ENCODE measurements at regions of chr1 and their contacts with region 1.

Region 1: GRCh38 chr1:92623187-92623778 is 136.6 kb upstream of the GFI1 start:
- DNase-seq: peak in 3 of 14 experiments; percentile 47 to 51 (median 50)
- ATAC-seq: no peak
- H3K4me3 ChIP-seq: no peak overlapping the region
- H3K4me3 Mint-ChIP-seq: no peak overlapping the region
- H3K27ac ChIP-seq: no peak overlapping the region
- H3K27ac Mint-ChIP-seq: no peak overlapping the region
- H3K4me1 ChIP-seq: no peaks in the 10 kb centered on the region
- H3K4me1 Mint-ChIP-seq: no peaks in the 10 kb centered on the region
- H3K27me3 ChIP-seq: no peaks in the 10 kb centered on the region
- H3K27me3 Mint-ChIP-seq: no peaks in the 10 kb centered on the region
- CTCF ChIP-seq: peak; percentile 76

Region 2: GRCh38 chr1:91282695-91283420 is 1340.4 kb before region 1 on chr1:
- CTCF ChIA-PET with region 1: no interaction called
- POLR2A ChIA-PET with region 1: no interaction called
- intact Hi-C with region 1: loop called in 1 of 2 experiments (anchors 5 kb)
- DNase-seq: peak in 12 of 14 experiments; percentile 2 to 67 (median 22)
- ATAC-seq: no peak
- H3K4me3 ChIP-seq: no peak overlapping the region
- H3K4me3 Mint-ChIP-seq: no peak overlapping the region
- H3K27ac ChIP-seq: no peak overlapping the region
- H3K27ac Mint-ChIP-seq: no peak overlapping the region
- H3K4me1 ChIP-seq: no peaks in the 10 kb centered on the region
- H3K4me1 Mint-ChIP-seq: no peaks in the 10 kb centered on the region
- H3K27me3 ChIP-seq: no peaks in the 10 kb centered on the region
- H3K27me3 Mint-ChIP-seq: peaks cover 11% of the 10 kb centered on the region
- CTCF ChIP-seq: peak; percentile 69

Region 3: GRCh38 chr1:91500756-91501522 is 1122.3 kb before region 1 on chr1 and contains the start of gene CDC7:
- CTCF ChIA-PET with region 1: no interaction called
- POLR2A ChIA-PET with region 1: no interaction called
- intact Hi-C with region 1: loop called in 1 of 2 experiments (anchors 10 kb)
- DNase-seq: peak; percentile 61 to 92 (median 80)
- ATAC-seq: peak; percentile 83
- H3K4me3 ChIP-seq: peak within 1 kb of the TSS; percentile 74
- H3K4me3 Mint-ChIP-seq: no peak within 1 kb of the TSS
- H3K27ac ChIP-seq: peak within 1 kb of the TSS; percentile 35 to 62
- H3K27ac Mint-ChIP-seq: no peak within 1 kb of the TSS
- H3K4me1 ChIP-seq: peaks cover 13% of the 10 kb centered on the region
- H3K4me1 Mint-ChIP-seq: peaks cover 31% of the 10 kb centered on the region
- H3K27me3 ChIP-seq: no peaks in the 10 kb centered on the region
- H3K27me3 Mint-ChIP-seq: no peaks in the 10 kb centered on the region
- CTCF ChIP-seq: peak; percentile 61
- total RNA-seq, gene CDC7: 4.2 to 4.8 TPM

Region 4: GRCh38 chr1:91997607-91998195 is 625.6 kb before region 1 on chr1:
- CTCF ChIA-PET with region 1: interaction called, 5 read pairs
- POLR2A ChIA-PET with region 1: no interaction called
- intact Hi-C with region 1: loop called (anchors 1 kb)
- DNase-seq: peak in 12 of 14 experiments; percentile 3 to 79 (median 32)
- ATAC-seq: peak; percentile 54
- H3K4me3 ChIP-seq: no peak overlapping the region
- H3K4me3 Mint-ChIP-seq: no peak overlapping the region
- H3K27ac ChIP-seq: no peak overlapping the region
- H3K27ac Mint-ChIP-seq: no peak overlapping the region
- H3K4me1 ChIP-seq: no peaks in the 10 kb centered on the region
- H3K4me1 Mint-ChIP-seq: no peaks in the 10 kb centered on the region
- H3K27me3 ChIP-seq: no peaks in the 10 kb centered on the region
- H3K27me3 Mint-ChIP-seq: no peaks in the 10 kb centered on the region
- CTCF ChIP-seq: peak; percentile 77

Region 5: DNA sequence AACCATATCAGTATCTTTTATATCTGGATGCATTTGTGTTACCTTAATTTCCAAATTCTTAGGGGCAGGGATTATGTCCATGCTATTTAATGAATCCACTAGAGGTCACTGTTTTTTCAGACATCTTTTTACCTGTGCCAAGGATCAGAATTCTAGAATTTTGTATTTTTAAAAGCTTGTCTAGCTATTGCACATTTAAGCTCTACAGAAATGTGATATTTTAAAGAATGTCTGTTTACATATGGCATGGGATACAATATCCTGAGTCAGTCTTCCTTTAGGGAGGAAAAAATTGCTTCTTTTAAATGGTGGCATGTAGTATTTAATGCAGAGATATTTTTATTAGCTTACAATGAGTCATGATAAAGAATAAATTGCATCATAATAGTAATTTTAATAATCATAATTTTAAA is 313.1 kb before region 1 on chr1:
- CTCF ChIA-PET with region 1: interaction called, 7 read pairs
- POLR2A ChIA-PET with region 1: no interaction called
- intact Hi-C with region 1: loop called (anchors 1 kb)
- DNase-seq: peak in 3 of 14 experiments; percentile 62 to 66 (median 64)
- ATAC-seq: peak; percentile 72
- H3K4me3 ChIP-seq: no peak overlapping the region
- H3K4me3 Mint-ChIP-seq: no peak overlapping the region
- H3K27ac ChIP-seq: no peak overlapping the region
- H3K27ac Mint-ChIP-seq: no peak overlapping the region
- H3K4me1 ChIP-seq: peaks cover 24% of the 10 kb centered on the region
- H3K4me1 Mint-ChIP-seq: peaks cover 39% of the 10 kb centered on the region
- H3K27me3 ChIP-seq: no peaks in the 10 kb centered on the region
- H3K27me3 Mint-ChIP-seq: no peaks in the 10 kb centered on the region
- CTCF ChIP-seq: peak; percentile 75

Region 6: DNA sequence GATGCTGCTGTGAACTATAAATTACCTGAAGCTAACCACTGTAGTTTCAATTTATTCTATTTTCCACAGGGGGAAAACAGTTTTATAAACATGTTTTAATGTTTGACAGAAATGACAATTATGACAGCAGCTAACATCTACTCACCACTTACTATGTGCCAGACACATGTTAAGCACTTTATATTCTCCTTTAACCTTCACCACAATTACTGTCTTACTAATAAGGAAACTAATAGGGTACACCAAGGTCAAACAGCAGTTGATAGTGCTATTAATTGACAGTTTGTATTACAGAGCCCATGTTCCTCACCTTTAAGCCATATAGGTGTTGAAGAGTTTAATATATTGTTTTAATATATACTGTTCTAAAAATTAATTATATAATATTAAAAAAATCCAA is 15.2 kb after region 1 on chr1:
- CTCF ChIA-PET with region 1: no interaction called
- POLR2A ChIA-PET with region 1: no interaction called
- intact Hi-C with region 1: no loop called
- DNase-seq: no peak
- ATAC-seq: no peak
- H3K4me3 ChIP-seq: no peak overlapping the region
- H3K4me3 Mint-ChIP-seq: no peak overlapping the region
- H3K27ac ChIP-seq: no peak overlapping the region
- H3K27ac Mint-ChIP-seq: no peak overlapping the region
- H3K4me1 ChIP-seq: no peaks in the 10 kb centered on the region
- H3K4me1 Mint-ChIP-seq: no peaks in the 10 kb centered on the region
- H3K27me3 ChIP-seq: peaks cover 0 to 3% of the 10 kb centered on the region in 2 experiments
- H3K27me3 Mint-ChIP-seq: no peaks in the 10 kb centered on the region
- CTCF ChIP-seq: no peak

Region 7: DNA sequence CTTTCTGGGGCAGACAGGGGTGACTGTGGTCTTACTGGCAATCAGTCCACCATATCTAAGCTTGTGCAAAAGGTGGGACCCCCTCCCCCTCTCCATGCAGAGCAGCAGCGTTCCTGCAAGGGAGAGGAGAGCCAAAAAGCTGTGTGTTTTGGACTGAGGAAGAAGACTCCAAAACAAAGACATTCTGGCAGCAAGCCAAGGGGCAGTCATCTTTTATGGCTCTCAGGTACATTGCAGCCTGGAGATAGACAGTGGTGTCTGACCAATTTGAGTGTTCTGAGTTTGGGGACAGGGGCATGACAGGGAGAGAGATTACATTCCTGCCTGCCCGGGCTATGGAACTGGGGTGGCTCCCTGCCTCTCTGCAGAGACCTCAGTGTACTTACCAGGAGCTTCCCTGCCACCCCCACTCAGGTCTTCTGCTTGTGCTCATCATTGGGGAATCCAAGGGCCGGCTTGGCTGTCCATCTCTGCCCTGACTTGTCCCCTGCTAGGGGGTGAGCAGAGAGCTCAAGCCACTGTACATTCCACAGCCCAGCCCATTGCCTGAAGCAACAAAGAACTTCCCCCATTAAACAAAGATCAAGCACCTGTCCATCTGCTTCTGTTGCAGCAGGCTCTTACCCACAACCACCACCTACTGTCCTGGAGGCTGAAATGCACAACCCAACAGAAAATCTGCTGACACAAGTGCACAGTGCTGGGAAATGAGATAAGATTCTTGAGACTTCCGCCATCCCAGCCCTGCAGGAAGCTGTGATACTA is 30.5 kb after region 1 on chr1:
- CTCF ChIA-PET with region 1: no interaction called
- POLR2A ChIA-PET with region 1: no interaction called
- intact Hi-C with region 1: no loop called
- DNase-seq: no peak
- ATAC-seq: no peak
- H3K4me3 ChIP-seq: no peak overlapping the region
- H3K4me3 Mint-ChIP-seq: no peak overlapping the region
- H3K27ac ChIP-seq: no peak overlapping the region
- H3K27ac Mint-ChIP-seq: no peak overlapping the region
- H3K4me1 ChIP-seq: no peaks in the 10 kb centered on the region
- H3K4me1 Mint-ChIP-seq: no peaks in the 10 kb centered on the region
- H3K27me3 ChIP-seq: no peaks in the 10 kb centered on the region
- H3K27me3 Mint-ChIP-seq: no peaks in the 10 kb centered on the region
- CTCF ChIP-seq: no peak

Measured in CD4-positive, alpha-beta T cell (primary cell).